Activated naive CD4-positive, alpha-beta T cell treated with anti-CD3 and anti-CD28 coated beads for 36 hours (primary cell): ENCODE measurements at regions of chr11 and their contacts with region 1.

Region 1: GRCh38 chr11:76919887-76920746 is 59.4 kb downstream of the ACER3 start:
- DNase-seq: peak; percentile 76
- H3K4me3 Mint-ChIP-seq: peak overlapping the region; percentile 52
- H3K27ac Mint-ChIP-seq: no peak overlapping the region
- H3K4me1 Mint-ChIP-seq: peaks cover 6% of the 10 kb centered on the region
- H3K27me3 Mint-ChIP-seq: no peaks in the 10 kb centered on the region

Region 2: DNA sequence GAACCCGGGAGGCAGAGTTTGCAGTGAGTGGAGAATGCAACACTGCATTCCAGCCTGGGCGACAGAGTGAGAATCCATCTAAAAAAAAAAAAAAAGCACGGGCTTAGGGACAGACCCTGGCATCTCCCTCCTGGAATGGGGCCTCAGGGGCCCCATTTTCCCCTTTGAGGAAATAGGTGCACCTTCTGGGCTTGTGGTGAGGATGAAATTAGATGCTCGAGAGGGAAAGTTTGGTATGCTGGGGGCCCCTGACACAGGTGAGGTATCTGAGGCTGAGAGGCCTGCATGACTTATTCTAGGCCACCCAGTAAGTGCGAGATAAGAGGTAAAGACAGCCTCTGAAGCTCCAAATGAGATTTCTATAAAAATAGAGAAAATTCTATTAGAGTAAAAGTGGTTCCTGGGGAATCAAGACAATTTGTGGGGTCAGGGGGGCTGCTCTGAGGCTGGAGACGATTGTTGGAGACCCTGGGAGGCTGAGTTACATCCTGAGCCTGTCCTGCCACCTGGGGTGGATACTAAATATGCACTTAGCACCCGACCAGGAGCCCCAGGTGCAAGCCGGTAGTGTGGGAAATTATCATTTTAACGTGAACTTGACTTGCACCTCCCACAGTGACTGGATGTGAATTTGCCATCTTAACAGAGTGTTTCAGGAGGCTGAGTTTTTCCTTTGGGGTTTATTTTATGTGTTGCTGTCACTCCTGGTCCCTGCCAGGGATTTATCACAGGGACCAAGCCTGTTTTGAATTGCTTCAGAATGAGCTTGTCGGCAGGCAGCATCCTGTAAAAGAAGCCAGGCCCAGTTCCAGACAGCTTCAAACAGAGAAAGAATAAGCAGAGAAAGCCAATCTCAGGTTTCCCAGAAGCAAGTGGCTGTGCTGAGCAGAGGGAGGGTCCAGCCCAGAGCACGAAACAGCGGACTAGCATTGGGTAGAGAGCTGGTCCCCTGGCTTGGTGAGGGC is 185.4 kb before region 1 on chr11:
- CTCF ChIA-PET with region 1: interaction called, 48 read pairs
- intact Hi-C with region 1: loop called (anchors 1 kb)
- DNase-seq: no peak
- H3K4me3 Mint-ChIP-seq: no peak overlapping the region
- H3K27ac Mint-ChIP-seq: no peak overlapping the region
- H3K4me1 Mint-ChIP-seq: no peaks in the 10 kb centered on the region
- H3K27me3 Mint-ChIP-seq: no peaks in the 10 kb centered on the region

Region 3: GRCh38 chr11:76807206-76807875 is 112.8 kb before region 1 on chr11:
- CTCF ChIA-PET with region 1: interaction called, 137 read pairs
- intact Hi-C with region 1: loop called (anchors 1 kb)
- DNase-seq: peak; percentile 86
- H3K4me3 Mint-ChIP-seq: no peak overlapping the region
- H3K27ac Mint-ChIP-seq: no peak overlapping the region
- H3K4me1 Mint-ChIP-seq: peaks cover 26% of the 10 kb centered on the region
- H3K27me3 Mint-ChIP-seq: peaks cover 7% of the 10 kb centered on the region

Region 4: DNA sequence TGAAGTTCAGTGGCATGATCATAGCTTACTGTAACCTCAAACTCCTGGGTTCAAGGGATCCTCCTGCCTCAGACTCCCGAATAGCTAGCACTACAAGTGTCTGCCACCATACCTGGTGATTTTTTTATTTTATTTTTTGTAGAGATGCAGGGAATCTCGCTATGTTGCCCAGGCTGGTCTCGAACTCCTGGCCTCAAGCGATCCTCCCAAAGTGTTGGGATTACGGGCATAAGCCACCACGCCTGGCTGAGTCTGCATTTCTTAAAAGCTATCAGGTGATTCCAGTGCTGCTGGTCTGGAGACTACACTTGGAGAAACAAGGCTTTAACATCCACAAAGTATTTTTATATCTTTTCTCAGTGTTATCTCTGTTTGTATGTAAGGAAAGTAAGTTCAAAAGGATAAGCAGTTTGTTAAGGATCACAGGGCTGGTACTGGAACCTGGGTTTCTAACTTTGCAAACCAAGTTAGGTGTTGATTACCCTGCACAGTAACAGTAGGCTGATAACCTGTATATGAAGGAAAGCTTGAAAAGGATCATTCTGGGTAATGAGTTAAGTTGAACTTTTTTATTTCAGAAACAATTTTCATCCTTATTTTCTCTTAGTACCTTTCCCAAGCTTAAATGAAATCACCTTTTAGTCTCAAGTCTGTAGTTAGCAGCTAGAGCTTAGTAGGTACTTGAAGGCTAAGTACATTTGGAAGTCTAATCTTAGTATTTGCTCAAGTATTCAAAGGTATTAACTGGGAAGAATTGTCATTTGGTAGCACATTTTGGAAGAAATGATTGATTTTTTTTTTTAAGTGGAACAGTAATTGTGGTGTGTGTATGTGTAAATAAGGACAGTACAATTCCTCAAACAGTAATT is 46.9 kb before region 1 on chr11:
- CTCF ChIA-PET with region 1: interaction called, 11 read pairs
- intact Hi-C with region 1: no loop called
- DNase-seq: no peak
- H3K4me3 Mint-ChIP-seq: no peak overlapping the region
- H3K27ac Mint-ChIP-seq: no peak overlapping the region
- H3K4me1 Mint-ChIP-seq: no peaks in the 10 kb centered on the region
- H3K27me3 Mint-ChIP-seq: no peaks in the 10 kb centered on the region

Region 5: DNA sequence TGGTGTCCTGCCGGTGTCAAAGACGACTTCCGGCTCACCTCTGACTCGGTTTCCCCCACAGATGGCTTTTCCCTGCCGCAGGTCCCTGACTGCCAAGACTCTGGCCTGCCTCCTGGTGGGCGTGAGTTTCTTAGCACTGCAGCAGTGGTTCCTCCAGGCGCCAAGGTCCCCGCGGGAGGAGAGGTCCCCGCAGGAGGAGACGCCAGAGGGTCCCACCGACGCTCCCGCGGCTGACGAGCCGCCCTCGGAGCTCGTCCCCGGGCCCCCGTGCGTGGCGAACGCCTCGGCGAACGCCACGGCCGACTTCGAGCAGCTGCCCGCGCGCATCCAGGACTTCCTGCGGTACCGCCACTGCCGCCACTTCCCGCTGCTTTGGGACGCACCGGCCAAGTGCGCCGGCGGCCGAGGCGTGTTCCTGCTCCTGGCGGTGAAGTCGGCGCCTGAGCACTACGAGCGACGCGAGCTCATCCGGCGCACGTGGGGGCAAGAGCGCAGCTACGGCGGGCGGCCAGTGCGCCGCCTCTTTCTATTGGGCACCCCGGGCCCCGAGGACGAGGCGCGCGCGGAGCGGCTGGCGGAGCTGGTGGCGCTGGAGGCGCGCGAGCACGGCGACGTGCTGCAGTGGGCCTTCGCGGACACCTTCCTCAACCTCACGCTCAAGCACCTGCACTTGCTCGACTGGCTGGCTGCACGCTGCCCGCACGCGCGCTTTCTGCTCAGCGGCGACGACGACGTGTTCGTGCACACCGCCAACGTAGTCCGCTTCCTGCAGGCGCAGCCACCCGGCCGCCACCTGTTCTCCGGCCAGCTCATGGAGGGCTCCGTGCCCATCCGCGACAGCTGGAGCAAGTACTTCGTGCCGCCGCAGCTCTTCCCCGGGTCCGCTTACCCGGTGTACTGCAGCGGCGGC is 119.6 kb after region 1 on chr11:
- CTCF ChIA-PET with region 1: interaction called, 29 read pairs
- intact Hi-C with region 1: no loop called
- DNase-seq: peak; percentile 36
- H3K4me3 Mint-ChIP-seq: peak overlapping the region; percentile 16
- H3K27ac Mint-ChIP-seq: no peak overlapping the region
- H3K4me1 Mint-ChIP-seq: peaks cover 6% of the 10 kb centered on the region
- H3K27me3 Mint-ChIP-seq: peaks cover 34% of the 10 kb centered on the region

Region 6: DNA sequence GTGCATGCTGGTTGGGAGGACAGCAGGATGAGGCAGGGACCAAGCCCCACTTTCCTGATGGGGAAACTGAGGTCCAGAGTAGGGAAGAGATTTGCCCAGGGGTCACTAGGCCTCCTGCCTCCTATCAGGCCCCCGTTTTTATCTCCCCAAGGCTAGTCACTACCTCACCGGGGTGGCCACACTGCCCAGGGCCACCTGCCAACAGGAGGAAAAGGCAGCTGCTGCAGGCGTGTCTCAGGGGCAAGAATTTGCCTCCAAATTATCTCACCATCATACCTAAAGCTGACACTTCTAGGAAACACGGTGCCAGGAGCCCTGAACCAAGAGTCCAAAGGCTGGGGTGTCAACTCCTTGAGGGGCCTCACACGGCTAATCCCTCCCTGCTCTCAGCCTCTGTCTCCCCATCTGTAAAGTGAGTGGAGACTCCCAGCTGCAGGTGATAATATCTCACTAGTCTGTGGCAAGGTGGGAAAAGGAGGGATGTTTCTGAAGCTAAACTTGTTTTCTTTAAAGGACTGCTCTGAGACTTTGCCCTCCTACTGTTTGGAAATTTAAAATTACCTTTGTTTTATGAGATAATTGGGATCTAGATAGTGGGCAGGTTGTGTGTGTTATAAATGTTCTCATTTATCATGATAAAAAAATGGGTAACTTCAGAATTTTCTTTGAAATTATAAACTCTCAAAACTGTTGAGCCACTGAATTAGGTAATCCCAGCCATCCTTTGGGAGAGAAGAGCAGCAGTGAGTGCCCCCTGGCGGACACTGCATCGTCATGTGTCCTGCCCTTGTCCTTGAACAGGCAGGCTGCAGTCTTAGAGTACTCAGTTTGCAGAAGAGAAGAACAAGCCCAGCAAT is 267.9 kb after region 1 on chr11:
- CTCF ChIA-PET with region 1: interaction called, 3 read pairs
- intact Hi-C with region 1: loop called (anchors 1 kb)
- DNase-seq: peak; percentile 85
- H3K4me3 Mint-ChIP-seq: no peak overlapping the region
- H3K27ac Mint-ChIP-seq: no peak overlapping the region
- H3K4me1 Mint-ChIP-seq: no peaks in the 10 kb centered on the region
- H3K27me3 Mint-ChIP-seq: no peaks in the 10 kb centered on the region